Activated B cell treated with CpG ODN at 0.5 μM for 24 hours (primary cell): ENCODE measurements at regions of chr16 and their contacts with region 1.

Region 1: DNA sequence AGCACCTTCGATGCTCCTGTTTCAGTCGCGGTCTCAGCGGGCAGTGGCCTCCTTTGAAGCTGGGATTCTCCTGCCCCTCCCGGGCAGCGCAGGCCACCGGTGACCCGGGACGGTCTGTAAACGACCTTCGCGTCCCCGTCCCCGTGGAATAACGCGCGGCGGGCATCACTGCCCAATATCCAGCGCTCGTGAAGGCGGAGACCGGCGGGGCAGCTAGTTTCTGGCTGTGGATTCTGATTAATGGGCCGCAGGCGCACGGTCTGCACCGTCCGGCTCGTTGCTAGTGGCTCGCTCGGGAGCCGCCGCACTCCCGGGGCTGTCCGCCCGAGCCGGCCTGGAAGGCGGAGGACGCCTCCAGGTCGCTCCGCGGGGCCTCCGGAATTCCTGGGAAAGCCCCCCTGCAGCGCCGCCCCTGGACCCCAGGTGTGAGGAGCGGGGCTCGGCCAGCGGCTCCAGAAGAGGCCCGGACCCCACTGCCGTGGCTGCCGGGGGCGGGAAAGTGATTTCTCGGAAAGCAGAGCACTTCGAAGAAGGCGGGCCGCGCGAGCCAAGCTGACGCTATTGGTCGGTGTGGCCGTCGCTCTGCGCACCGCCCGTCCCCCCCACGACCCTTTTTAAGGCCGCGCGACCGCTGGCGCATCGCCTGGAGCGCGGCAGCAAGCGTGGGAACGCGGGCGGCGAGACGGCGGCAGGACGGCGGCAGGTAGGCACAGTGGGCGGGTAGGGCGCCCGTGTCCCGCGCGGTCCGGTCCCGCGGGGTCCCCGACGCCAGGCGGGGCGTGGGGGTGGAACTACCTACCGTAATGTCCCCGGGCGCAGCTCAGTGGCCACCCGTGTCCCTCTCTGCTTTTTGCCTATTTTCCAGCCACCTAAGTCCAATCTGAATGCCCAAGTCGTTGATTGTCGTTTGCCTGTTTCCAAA is at the start of gene IRF8:
- DNase-seq: peak; percentile 89
- ATAC-seq: peak; percentile 64
- H3K4me3 Mint-ChIP-seq: peak within 1 kb of the TSS; percentile 84
- H3K27ac Mint-ChIP-seq: peak within 1 kb of the TSS; percentile 95
- H3K4me1 Mint-ChIP-seq: peaks cover 63% of the 10 kb centered on the region
- H3K27me3 Mint-ChIP-seq: no peaks in the 10 kb centered on the region
- CTCF ChIP-seq: no peak
- total RNA-seq, gene IRF8: 234 and 248 TPM in 2 replicates

Region 2: GRCh38 chr16:85869785-85870558 is 28.8 kb before region 1 on chr16:
- CTCF ChIA-PET with region 1: interaction called, 3 read pairs
- POLR2A ChIA-PET with region 1: interaction called, 54 read pairs
- intact Hi-C with region 1: loop called (anchors 2 kb)
- DNase-seq: no peak
- ATAC-seq: peak; percentile 3
- H3K4me3 Mint-ChIP-seq: peak overlapping the region; percentile 70
- H3K27ac Mint-ChIP-seq: peak overlapping the region; percentile 90
- H3K4me1 Mint-ChIP-seq: peaks cover 79% of the 10 kb centered on the region
- H3K27me3 Mint-ChIP-seq: no peaks in the 10 kb centered on the region
- CTCF ChIP-seq: no peak

Region 3: DNA sequence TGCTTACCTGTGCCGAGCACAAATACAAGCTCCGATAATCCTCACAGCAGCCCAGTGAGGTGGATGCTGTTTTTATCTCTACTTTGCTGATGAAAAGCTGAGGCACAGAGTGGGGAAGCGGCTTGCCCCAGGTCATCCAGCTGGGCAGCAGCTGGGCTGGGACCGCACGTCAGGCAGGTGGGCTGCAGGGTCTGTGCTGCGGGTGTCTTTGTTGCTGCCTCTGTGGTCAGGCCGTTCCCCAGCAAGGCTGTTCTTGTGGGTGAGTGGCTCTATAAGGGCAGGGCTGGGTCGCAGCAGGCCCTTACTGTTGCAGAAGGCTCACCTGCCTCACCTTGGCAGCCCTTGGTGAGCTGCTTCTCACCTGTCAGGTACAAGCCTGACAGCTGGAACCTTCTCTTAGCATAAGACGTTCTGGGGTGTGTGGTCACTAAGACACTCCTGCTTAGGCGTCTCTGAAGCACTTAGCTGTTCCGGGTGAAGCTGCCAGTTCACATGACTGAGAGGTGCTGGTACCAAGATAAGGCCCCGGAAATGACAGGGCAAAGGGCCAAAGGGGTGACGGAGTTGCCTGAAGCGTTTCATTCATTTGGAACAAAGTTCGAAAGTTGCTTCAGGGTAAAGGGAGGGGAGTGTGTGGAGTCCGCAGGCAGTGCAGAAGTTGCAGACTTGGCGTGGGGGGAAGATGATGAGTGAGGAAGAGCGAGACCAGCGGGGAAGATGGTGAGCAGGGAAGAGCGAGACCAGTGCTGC is 17.5 kb after region 1 on chr16:
- CTCF ChIA-PET with region 1: interaction called, 7 read pairs
- POLR2A ChIA-PET with region 1: interaction called, 27 read pairs
- intact Hi-C with region 1: loop called (anchors 1 kb)
- DNase-seq: no peak
- ATAC-seq: no peak
- H3K4me3 Mint-ChIP-seq: peak overlapping the region; percentile 16
- H3K27ac Mint-ChIP-seq: peak overlapping the region; percentile 97
- H3K4me1 Mint-ChIP-seq: peaks cover 86% of the 10 kb centered on the region
- H3K27me3 Mint-ChIP-seq: no peaks in the 10 kb centered on the region
- CTCF ChIP-seq: no peak

Region 4: DNA sequence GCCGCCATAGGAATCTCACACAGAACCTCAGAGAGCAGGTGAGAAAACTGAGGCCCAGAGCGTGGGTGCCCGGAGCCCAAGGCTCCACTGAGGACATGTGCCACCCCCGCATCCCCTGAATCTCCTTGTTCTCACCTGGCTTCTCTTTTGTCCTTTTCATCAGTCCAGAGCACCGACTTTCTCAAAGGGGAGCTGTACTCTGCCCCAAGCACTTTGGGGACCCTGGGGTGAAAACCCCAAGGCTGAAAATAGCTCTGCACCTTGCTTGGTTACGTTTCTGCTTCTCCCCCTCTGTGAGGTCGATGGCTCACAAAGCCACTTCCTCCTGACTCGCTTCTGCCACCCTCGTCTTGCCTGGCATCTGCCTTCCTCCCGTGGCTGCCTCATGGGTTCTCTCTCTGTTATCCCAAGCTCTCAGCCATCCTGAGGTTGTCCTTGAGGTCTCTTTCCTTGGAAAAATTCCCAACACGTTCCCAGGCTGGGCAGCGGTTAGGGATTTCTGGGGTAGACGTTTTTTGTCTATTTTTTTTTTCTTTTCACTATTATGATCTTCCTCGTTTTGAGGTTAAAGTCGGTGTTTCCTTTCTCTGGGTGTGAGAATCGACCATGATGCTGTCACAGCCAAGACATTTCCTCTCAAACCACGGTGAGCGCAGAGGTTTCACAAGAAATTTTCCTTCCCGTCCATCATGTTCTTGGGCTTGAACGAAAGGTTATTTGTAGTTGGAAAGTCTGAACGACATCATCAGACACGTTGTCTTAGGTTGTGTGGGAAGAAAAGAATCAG is 37.4 kb after region 1 on chr16:
- CTCF ChIA-PET with region 1: interaction called, 8 read pairs
- POLR2A ChIA-PET with region 1: interaction called, 44 read pairs
- intact Hi-C with region 1: loop called (anchors 1 kb)
- DNase-seq: peak; percentile 66
- ATAC-seq: peak; percentile 78
- H3K4me3 Mint-ChIP-seq: peak overlapping the region; percentile 75
- H3K27ac Mint-ChIP-seq: peak overlapping the region; percentile 98
- H3K4me1 Mint-ChIP-seq: peaks cover 90% of the 10 kb centered on the region
- H3K27me3 Mint-ChIP-seq: no peaks in the 10 kb centered on the region
- CTCF ChIP-seq: no peak

Region 5: GRCh38 chr16:85986931-85987749 is 88.4 kb after region 1 on chr16:
- CTCF ChIA-PET with region 1: interaction called, 29 read pairs
- POLR2A ChIA-PET with region 1: interaction called, 159 read pairs
- intact Hi-C with region 1: loop called (anchors 1 kb)
- DNase-seq: peak; percentile 36
- ATAC-seq: no peak
- H3K4me3 Mint-ChIP-seq: peak overlapping the region; percentile 5
- H3K27ac Mint-ChIP-seq: peak overlapping the region; percentile 47
- H3K4me1 Mint-ChIP-seq: peaks cover 98% of the 10 kb centered on the region
- H3K27me3 Mint-ChIP-seq: no peaks in the 10 kb centered on the region
- CTCF ChIP-seq: no peak

Region 6: DNA sequence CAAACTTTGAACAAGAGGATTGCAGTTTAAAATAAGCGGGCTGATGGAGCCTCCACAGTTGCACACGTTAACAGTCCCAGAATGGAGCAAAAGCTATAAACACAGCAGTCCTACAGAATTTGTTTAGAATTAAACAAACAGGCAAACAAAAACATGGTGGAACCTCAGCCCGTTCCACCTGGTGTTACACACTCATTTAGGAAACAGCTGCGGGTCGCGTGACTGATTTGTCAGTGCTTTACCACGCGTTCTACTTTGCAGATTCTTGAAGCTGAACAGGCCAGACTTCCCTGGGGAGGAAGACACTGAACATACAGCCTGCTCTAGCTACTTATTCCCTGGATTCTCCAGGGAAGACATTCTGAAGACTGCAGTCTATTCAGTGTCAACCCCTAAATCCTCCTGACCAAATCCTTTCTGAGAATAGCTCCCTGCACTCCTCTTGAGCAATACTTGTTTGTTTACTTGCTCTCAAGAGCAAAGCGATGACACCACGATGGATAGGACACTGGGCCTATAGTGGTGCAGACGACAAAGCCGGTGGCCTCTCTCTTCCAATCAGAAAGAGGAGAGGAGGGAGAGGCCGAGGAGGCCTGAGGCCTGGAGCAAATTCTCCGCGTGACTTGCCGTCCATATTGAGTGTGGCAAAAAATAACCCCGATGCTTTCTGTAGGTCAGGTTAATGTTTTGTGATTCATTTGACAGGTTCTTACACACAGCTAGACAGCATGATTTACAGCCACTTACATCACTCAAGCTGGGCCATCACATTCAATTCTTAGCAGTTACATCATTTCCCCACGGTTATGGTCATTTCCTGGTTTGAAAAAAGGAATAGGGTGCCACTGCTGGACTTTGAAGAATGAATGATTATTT is 1489.4 kb after region 1 on chr16:
- CTCF ChIA-PET with region 1: no interaction called
- POLR2A ChIA-PET with region 1: no interaction called
- intact Hi-C with region 1: loop called (anchors 10 kb)
- DNase-seq: peak; percentile 59
- ATAC-seq: peak; percentile 62
- H3K4me3 Mint-ChIP-seq: peak overlapping the region; percentile 70
- H3K27ac Mint-ChIP-seq: peak overlapping the region; percentile 98
- H3K4me1 Mint-ChIP-seq: peaks cover 52% of the 10 kb centered on the region
- H3K27me3 Mint-ChIP-seq: peaks cover 2% of the 10 kb centered on the region
- CTCF ChIP-seq: no peak